IMR-90 (cell line): ENCODE measurements at regions of chr16 and their contacts with region 1.

Region 1: DNA sequence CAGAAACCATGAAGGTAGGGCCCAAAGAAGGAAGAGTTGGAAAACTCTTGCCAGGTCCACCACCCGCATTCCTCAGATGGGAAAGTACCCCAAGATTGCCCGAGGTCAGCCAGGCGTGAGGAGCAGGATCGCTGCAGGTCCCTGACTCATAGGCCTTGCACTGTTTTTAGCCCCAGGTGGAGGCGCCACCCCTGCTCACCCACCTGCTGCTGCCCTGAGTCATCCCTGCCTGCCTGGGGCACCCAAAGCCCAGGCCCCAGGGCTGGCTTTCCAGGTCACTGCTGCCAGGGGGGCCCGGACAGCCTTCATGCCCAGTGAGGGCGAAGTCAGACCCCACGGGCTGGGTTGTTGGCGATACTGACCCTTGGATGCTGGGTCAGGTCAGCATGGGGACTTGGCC is 100.9 kb downstream of the AMFR start:
- DNase-seq: no peak
- ATAC-seq: no peak
- H3K4me3 ChIP-seq: no peak overlapping the region
- H3K27ac ChIP-seq: no peak overlapping the region
- H3K4me1 ChIP-seq: no peaks in the 10 kb centered on the region
- H3K27me3 ChIP-seq: peaks cover 24% of the 10 kb centered on the region
- CTCF ChIP-seq: no peak
- POLR2A ChIP-seq: no peak
- RAD21 ChIP-seq: no peak

Region 2: GRCh38 chr16:55949518-55949917 is 374.9 kb before region 1 on chr16:
- CTCF ChIA-PET with region 1: no interaction called
- POLR2A ChIA-PET with region 1: no interaction called
- dilution Hi-C with region 1: no loop called
- in situ Hi-C with region 1: loop called (anchors 5 kb)
- intact Hi-C with region 1: no loop called
- DNase-seq: peak; percentile 31
- ATAC-seq: no peak
- H3K4me3 ChIP-seq: no peak overlapping the region
- H3K27ac ChIP-seq: no peak overlapping the region
- H3K4me1 ChIP-seq: no peaks in the 10 kb centered on the region
- H3K27me3 ChIP-seq: no peaks in the 10 kb centered on the region
- CTCF ChIP-seq: no peak
- POLR2A ChIP-seq: no peak
- RAD21 ChIP-seq: no peak